Gastrocnemius medialis (tissue), 4 donors: ENCODE measurements at regions of chrX and their contacts with region 1.

Region 1: GRCh38 chrX:145190801-145191389 is 56.4 kb upstream of the SPANXN1 start:
- DNase-seq: no peak
- ATAC-seq: no peak
- H3K4me3 ChIP-seq: no peak overlapping the region
- H3K27ac ChIP-seq: no peak overlapping the region
- H3K4me1 ChIP-seq: no peaks in the 10 kb centered on the region
- H3K27me3 ChIP-seq: no peaks in the 10 kb centered on the region
- CTCF ChIP-seq: no peak
- POLR2A ChIP-seq: no peak

Region 2: DNA sequence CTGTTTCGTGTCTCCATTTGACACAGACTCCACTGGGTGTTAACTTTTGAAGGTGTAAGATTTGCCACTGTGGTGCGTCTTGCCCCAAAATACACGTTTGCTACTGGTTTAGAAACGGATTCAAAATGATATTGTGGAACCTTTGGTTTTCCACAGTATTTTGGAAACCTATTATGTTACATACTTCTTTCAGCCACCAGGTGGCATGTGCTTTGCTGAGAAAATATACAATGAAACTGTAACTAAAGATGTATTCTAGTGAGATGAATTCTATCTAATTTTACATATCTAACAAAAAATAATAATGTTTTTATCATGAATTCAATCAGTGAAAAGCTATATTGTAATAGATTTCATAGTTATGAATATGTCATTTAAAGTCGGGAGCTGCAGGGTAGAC is 1526.6 kb before region 1 on chrX:
- in situ Hi-C with region 1: loop called in 1 of 4 experiments (anchors 25 kb)
- intact Hi-C with region 1: no loop called
- DNase-seq: no peak
- ATAC-seq: no peak
- H3K4me3 ChIP-seq: no peak overlapping the region
- H3K27ac ChIP-seq: no peak overlapping the region
- H3K4me1 ChIP-seq: no peaks in the 10 kb centered on the region
- H3K27me3 ChIP-seq: no peaks in the 10 kb centered on the region
- CTCF ChIP-seq: peak in 1 of 5 experiments; percentile 41
- POLR2A ChIP-seq: no peak

Region 3: DNA sequence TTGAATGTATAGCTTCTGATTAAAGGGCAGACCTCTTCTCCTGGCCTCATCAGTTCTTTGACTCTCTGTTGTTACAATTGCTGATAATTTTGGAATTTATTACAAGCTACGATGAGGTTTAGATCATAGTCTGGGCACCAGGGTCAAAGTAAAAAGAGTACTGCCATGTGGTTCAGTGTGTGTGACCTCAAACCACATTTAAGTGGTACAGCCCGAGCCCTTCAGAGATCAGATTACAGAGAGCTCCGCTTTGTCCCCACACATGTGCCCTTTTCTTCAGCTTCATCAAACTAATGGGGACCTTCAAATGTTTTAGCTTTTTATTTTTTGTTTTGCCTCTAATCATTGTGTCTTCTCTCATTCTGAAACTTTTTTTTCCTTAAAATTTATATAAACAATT is 1507.4 kb before region 1 on chrX:
- in situ Hi-C with region 1: loop called in 1 of 4 experiments (anchors 25 kb)
- intact Hi-C with region 1: no loop called
- DNase-seq: no peak
- ATAC-seq: no peak
- H3K4me3 ChIP-seq: no peak overlapping the region
- H3K27ac ChIP-seq: no peak overlapping the region
- H3K4me1 ChIP-seq: no peaks in the 10 kb centered on the region
- H3K27me3 ChIP-seq: no peaks in the 10 kb centered on the region
- CTCF ChIP-seq: no peak
- POLR2A ChIP-seq: no peak

Region 4: GRCh38 chrX:144214651-144215050 is 976.2 kb before region 1 on chrX:
- in situ Hi-C with region 1: no loop called
- intact Hi-C with region 1: no loop called
- DNase-seq: no peak
- ATAC-seq: no peak
- H3K4me3 ChIP-seq: no peak overlapping the region
- H3K27ac ChIP-seq: no peak overlapping the region
- H3K4me1 ChIP-seq: no peaks in the 10 kb centered on the region
- H3K27me3 ChIP-seq: no peaks in the 10 kb centered on the region
- CTCF ChIP-seq: no peak
- POLR2A ChIP-seq: no peak